A549 (cell line): ENCODE measurements at regions of chr17 and their contacts with region 1.

Region 1: DNA sequence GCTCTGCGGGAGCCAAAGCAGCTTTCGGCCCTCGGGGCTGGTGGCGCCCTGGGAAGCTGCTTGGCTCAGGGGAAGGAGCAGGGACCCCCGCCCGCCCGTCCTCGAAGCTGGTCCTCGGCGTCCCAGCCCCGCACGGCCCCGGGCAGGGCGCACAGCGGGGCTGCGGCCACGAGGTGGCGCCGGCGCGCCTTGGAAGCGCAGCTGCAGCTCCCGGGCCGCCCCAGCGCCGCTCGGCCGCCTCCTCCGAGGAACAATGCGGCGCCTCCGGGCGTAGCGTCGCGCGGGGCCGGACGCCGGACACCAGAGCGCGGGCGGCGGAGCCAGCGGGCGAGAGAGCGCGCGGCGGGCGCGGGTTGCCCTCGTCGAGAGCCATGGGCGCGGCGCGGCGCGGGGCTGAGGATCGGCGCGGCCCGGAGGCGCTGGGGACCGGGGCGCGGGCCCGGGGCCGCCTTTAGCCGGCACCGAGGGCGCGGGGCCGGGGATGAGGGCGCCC is at the start of gene MGAT5B:
- DNase-seq: peak; percentile 87 to 96
- ATAC-seq: peak; percentile 69 to 84
- H3K4me3 ChIP-seq: peak within 1 kb of the TSS; percentile 70
- H3K27ac ChIP-seq: peak within 1 kb of the TSS; percentile 93 to 97
- H3K4me1 ChIP-seq: peaks cover 52% of the 10 kb centered on the region
- CTCF ChIP-seq: peak; percentile 99
- EP300 ChIP-seq: no peak
- POLR2A ChIP-seq: peak; percentile 38
- RAD21 ChIP-seq: peak; percentile 84 to 100
- polyA plus RNA-seq, gene MGAT5B: 7.6 and 10.3 TPM in 2 replicates

Region 2: DNA sequence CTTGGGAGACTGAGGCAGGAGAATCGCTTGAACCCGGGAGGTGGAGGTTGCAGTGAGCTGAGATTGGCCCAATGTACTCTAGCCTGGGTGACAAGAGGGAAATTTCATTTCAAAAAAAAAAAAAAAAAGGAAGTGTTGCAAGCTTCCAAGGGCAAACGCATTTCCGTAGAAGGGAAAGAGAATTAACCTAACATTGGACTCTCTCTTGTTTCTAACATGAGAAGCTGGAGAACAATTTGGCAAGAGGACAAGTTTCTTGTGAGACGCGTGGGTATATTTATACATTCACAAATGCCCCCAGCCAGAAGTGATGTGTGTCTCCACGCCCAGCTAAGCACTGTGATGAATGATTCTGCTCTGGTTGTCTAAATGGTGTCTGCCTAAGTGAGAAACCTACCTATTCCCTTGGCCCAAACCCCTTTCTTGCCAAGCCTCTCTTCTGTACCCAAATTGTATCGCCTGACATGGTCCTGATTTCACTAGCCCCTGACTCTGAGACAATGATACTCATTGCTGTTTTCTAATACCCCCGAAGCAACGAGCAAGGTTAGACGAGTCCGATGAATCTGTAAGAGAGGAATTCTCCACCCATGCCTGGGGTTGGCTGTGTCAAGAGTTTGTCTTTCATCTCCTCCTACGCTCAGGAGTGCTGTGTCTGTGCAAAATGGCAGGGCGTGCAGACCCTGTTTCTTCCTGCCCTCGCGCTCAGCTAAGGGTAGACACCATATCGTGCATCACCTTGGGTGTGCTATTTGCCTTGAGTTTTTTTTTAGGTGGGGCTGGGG is 268.3 kb before region 1 on chr17:
- CTCF ChIA-PET with region 1: no interaction called
- POLR2A ChIA-PET with region 1: no interaction called
- DNase-seq: no peak
- ATAC-seq: no peak
- H3K4me3 ChIP-seq: no peak overlapping the region
- H3K27ac ChIP-seq: no peak overlapping the region
- H3K4me1 ChIP-seq: peaks cover 8% of the 10 kb centered on the region; the same call in 2 of the 3 replicates
- CTCF ChIP-seq: no peak
- EP300 ChIP-seq: no peak
- POLR2A ChIP-seq: no peak
- RAD21 ChIP-seq: no peak

Region 3: GRCh38 chr17:76810956-76811355 is 57.3 kb before region 1 on chr17:
- CTCF ChIA-PET with region 1: interaction called, 30 read pairs
- POLR2A ChIA-PET with region 1: no interaction called
- DNase-seq: no peak
- ATAC-seq: no peak; a peak in 1 of 6 replicates
- H3K4me3 ChIP-seq: no peak overlapping the region
- H3K27ac ChIP-seq: no peak overlapping the region
- H3K4me1 ChIP-seq: no peaks in the 10 kb centered on the region
- CTCF ChIP-seq: no peak
- EP300 ChIP-seq: no peak
- POLR2A ChIP-seq: no peak
- RAD21 ChIP-seq: no peak

Region 4: DNA sequence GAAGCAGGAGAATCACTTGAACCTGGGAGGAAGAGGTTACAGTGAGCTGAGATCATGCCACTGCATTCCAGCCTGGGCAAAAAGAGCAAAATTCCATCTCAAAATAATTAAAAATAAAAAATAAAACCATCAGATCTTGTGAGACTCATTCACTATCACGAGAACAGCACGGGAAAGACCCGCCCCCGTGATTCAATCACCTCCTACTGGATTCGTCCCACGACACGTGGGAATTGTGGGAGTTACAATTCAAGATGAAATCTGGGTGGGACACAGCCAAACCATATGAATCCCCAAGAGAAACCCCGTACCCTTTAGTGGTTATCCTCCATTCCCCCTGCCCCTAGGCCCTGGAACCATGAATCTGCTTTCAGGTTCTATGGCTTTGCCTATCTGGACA is 15.4 kb before region 1 on chr17:
- CTCF ChIA-PET with region 1: interaction called, 71 read pairs
- POLR2A ChIA-PET with region 1: no interaction called
- DNase-seq: no peak
- ATAC-seq: no peak
- H3K4me3 ChIP-seq: no peak overlapping the region
- H3K27ac ChIP-seq: no peak overlapping the region
- H3K4me1 ChIP-seq: peaks cover 9% of the 10 kb centered on the region; the same call in 1 of the 3 replicates
- CTCF ChIP-seq: no peak
- EP300 ChIP-seq: no peak
- POLR2A ChIP-seq: no peak
- RAD21 ChIP-seq: no peak

Region 5: GRCh38 chr17:76924345-76925342 is 56.4 kb after region 1 on chr17:
- CTCF ChIA-PET with region 1: interaction called, 15 read pairs
- POLR2A ChIA-PET with region 1: no interaction called
- DNase-seq: peak in 1 of 2 experiments; percentile 24
- ATAC-seq: peak; percentile 3 to 47; a peak in 3 of 6 replicates
- H3K4me3 ChIP-seq: no peak overlapping the region
- H3K27ac ChIP-seq: peak overlapping the region in 1 of 2 experiments; percentile 26; a peak in 2 of 6 replicates
- H3K4me1 ChIP-seq: peaks cover 5% of the 10 kb centered on the region; the same call in 1 of the 3 replicates
- CTCF ChIP-seq: no peak
- EP300 ChIP-seq: no peak
- POLR2A ChIP-seq: no peak
- RAD21 ChIP-seq: no peak

Region 6: GRCh38 chr17:77011173-77012011 is 143.2 kb after region 1 on chr17:
- CTCF ChIA-PET with region 1: interaction called, 13 read pairs
- POLR2A ChIA-PET with region 1: no interaction called
- DNase-seq: peak in 1 of 2 experiments; percentile 65
- ATAC-seq: 0 out of 6 replicates have a peak, but pooled peaks of 1 of the 2 experiments have one; percentile 41
- H3K4me3 ChIP-seq: no peak overlapping the region
- H3K27ac ChIP-seq: no peak overlapping the region
- H3K4me1 ChIP-seq: no peaks in the 10 kb centered on the region
- CTCF ChIP-seq: peak; percentile 42; the same call in 2 of the 3 replicates
- EP300 ChIP-seq: no peak
- POLR2A ChIP-seq: no peak
- RAD21 ChIP-seq: peak; percentile 48 to 71

Region 7: GRCh38 chr17:77088455-77089123 is 220.4 kb after region 1 on chr17:
- CTCF ChIA-PET with region 1: interaction called, 11 read pairs
- POLR2A ChIA-PET with region 1: no interaction called
- DNase-seq: peak; percentile 99
- ATAC-seq: peak; percentile 91 to 96
- H3K4me3 ChIP-seq: peak overlapping the region; percentile 99
- H3K27ac ChIP-seq: peak overlapping the region; percentile 96 to 100
- H3K4me1 ChIP-seq: peaks cover 28% of the 10 kb centered on the region
- CTCF ChIP-seq: peak; percentile 73
- EP300 ChIP-seq: no peak
- POLR2A ChIP-seq: peak; percentile 88
- RAD21 ChIP-seq: peak; percentile 46 to 67

Region 8: GRCh38 chr17:77127735-77128361 is 259.6 kb after region 1 on chr17:
- CTCF ChIA-PET with region 1: no interaction called
- POLR2A ChIA-PET with region 1: no interaction called
- DNase-seq: no peak
- ATAC-seq: no peak
- H3K4me3 ChIP-seq: no peak overlapping the region
- H3K27ac ChIP-seq: peak overlapping the region; percentile 3 to 36; a peak in 4 of 6 replicates
- H3K4me1 ChIP-seq: peaks cover 66% of the 10 kb centered on the region
- CTCF ChIP-seq: no peak
- EP300 ChIP-seq: no peak
- POLR2A ChIP-seq: no peak
- RAD21 ChIP-seq: no peak